ENCODE measurements at regions of chrX and their contacts with region 1.

Region 1: GRCh38 chrX:20001588-20001987 is 10.7 kb upstream of the BCLAF3 start:
- DNase-seq: no peak
- ATAC-seq: no peak
- H3K4me3 ChIP-seq: no peak overlapping the region
- H3K4me3 Mint-ChIP-seq: no peak overlapping the region
- H3K27ac ChIP-seq: no peak overlapping the region
- H3K27ac Mint-ChIP-seq: no peak overlapping the region
- H3K4me1 ChIP-seq: no peaks in the 10 kb centered on the region
- H3K4me1 Mint-ChIP-seq: no peaks in the 10 kb centered on the region
- H3K27me3 ChIP-seq: no peaks in the 10 kb centered on the region
- H3K27me3 Mint-ChIP-seq: no peaks in the 10 kb centered on the region
- CTCF ChIP-seq: no peak

Region 2: GRCh38 chrX:19496711-19497110 is 504.9 kb before region 1 on chrX:
- CTCF ChIA-PET with region 1: no interaction called
- POLR2A ChIA-PET with region 1: no interaction called
- intact Hi-C with region 1: loop called in 1 of 2 experiments (anchors 10 kb)
- DNase-seq: no peak
- ATAC-seq: no peak
- H3K4me3 ChIP-seq: no peak overlapping the region
- H3K4me3 Mint-ChIP-seq: no peak overlapping the region
- H3K27ac ChIP-seq: no peak overlapping the region
- H3K27ac Mint-ChIP-seq: no peak overlapping the region
- H3K4me1 ChIP-seq: no peaks in the 10 kb centered on the region
- H3K4me1 Mint-ChIP-seq: no peaks in the 10 kb centered on the region
- H3K27me3 ChIP-seq: no peaks in the 10 kb centered on the region
- H3K27me3 Mint-ChIP-seq: peaks cover 7% of the 10 kb centered on the region
- CTCF ChIP-seq: no peak

Region 3: GRCh38 chrX:20029728-20030127 is 28.1 kb after region 1 on chrX:
- CTCF ChIA-PET with region 1: no interaction called
- POLR2A ChIA-PET with region 1: no interaction called
- intact Hi-C with region 1: no loop called
- DNase-seq: peak in 1 of 9 experiments; percentile 2
- ATAC-seq: no peak
- H3K4me3 ChIP-seq: no peak overlapping the region
- H3K4me3 Mint-ChIP-seq: no peak overlapping the region
- H3K27ac ChIP-seq: no peak overlapping the region
- H3K27ac Mint-ChIP-seq: peak overlapping the region; percentile 18
- H3K4me1 ChIP-seq: peaks cover 11% of the 10 kb centered on the region
- H3K4me1 Mint-ChIP-seq: peaks cover 26% of the 10 kb centered on the region
- H3K27me3 ChIP-seq: no peaks in the 10 kb centered on the region
- H3K27me3 Mint-ChIP-seq: no peaks in the 10 kb centered on the region
- CTCF ChIP-seq: no peak

Region 4: DNA sequence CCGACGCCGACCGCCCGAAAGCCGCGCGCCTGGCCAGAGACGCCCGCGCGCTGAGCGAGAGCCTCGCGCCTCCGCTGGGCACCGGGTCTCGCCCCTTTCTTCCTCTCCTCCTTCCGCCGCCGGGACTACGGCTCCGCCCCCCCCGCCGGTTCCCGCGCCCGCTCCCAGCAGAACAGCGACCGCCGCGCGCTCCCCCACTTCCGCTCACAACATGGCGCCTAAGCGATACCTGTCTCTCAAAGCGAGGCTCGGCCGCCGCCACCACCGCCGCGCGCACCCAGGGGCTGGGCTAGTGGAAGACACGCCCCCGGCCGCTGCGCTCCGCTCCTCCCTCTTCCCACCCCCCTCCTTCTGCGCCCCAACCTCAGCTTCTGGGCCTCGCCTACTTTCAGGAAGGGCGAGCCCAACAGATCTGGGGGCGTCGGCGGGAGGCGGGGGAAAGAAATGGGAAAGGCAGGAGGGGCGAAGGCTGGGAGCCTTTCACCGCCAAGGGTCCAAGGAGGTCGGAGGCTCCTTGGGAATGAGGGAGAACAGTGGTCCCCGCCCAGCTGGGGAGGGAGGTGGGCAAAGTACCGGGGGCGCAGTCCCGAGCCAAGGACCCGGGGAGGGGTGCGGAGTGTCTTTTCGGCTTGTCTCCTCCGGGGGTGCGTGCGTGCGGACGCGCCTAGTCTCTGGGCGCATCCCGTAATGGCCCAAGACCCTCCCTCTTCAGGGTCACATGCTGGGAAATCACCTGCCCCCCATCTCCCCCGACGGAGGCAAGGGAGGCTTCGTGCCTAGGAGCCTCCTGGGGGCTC is 265.4 kb after region 1 on chrX and contains the start of gene RPS6KA3:
- CTCF ChIA-PET with region 1: no interaction called
- POLR2A ChIA-PET with region 1: no interaction called
- intact Hi-C with region 1: no loop called
- DNase-seq: peak; percentile 79 to 94 (median 89)
- ATAC-seq: peak; percentile 83
- H3K4me3 ChIP-seq: peak within 1 kb of the TSS; percentile 70 to 85
- H3K4me3 Mint-ChIP-seq: peak within 1 kb of the TSS; percentile 96
- H3K27ac ChIP-seq: peak within 1 kb of the TSS; percentile 80 to 83
- H3K27ac Mint-ChIP-seq: peak within 1 kb of the TSS; percentile 97
- H3K4me1 ChIP-seq: peaks cover 14% of the 10 kb centered on the region
- H3K4me1 Mint-ChIP-seq: peaks cover 19% of the 10 kb centered on the region
- H3K27me3 ChIP-seq: no peaks in the 10 kb centered on the region
- H3K27me3 Mint-ChIP-seq: no peaks in the 10 kb centered on the region
- CTCF ChIP-seq: no peak
- total RNA-seq, gene RPS6KA3: 36.9 to 37.3 TPM